Vagina (tissue), 2 donors: ENCODE measurements at regions of chr14 and their contacts with region 1.

Region 1: DNA sequence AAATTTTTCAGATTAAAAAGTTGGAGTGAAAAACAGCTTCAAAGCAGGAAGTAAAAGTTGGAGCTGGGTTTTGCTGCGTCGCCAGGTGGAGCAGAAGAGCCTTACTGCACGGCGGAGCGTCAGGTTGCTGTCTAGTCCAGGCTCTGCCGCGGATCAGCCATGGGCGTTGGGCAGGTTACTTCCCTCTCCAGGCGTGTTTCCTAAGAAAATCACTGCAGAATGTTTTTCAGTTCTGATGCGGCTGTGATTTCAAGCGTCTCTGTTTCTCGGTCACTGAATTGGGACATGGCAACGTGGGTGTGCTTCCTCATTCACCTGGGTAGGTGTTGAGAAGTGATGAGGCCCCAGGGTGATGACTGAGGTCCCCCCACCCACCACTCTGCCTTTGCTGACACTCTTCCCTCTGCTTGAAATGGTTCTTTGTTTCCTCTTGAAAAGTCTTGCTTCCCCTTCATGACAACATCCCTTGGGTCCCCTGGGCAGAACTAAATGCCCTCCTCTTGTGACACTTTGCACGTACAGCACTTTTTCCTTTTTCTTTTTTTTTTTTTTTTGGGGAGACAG is 7.6 kb downstream of the EVL start:
- DNase-seq: no peak
- H3K4me3 ChIP-seq: no peak overlapping the region
- H3K27ac ChIP-seq: no peak overlapping the region
- H3K4me1 ChIP-seq: peaks cover 54% of the 10 kb centered on the region
- H3K27me3 ChIP-seq: no peaks in the 10 kb centered on the region
- CTCF ChIP-seq: no peak
- POLR2A ChIP-seq: no peak

Region 2: GRCh38 chr14:99215277-99215676 is 857.6 kb before region 1 on chr14:
- intact Hi-C with region 1: no loop called
- DNase-seq: no peak
- H3K4me3 ChIP-seq: peak overlapping the region in 1 of 2 donors; percentile 30
- H3K27ac ChIP-seq: no peak overlapping the region
- H3K4me1 ChIP-seq: peaks cover 38% of the 10 kb centered on the region
- H3K27me3 ChIP-seq: no peaks in the 10 kb centered on the region
- CTCF ChIP-seq: no peak
- POLR2A ChIP-seq: no peak

Region 3: DNA sequence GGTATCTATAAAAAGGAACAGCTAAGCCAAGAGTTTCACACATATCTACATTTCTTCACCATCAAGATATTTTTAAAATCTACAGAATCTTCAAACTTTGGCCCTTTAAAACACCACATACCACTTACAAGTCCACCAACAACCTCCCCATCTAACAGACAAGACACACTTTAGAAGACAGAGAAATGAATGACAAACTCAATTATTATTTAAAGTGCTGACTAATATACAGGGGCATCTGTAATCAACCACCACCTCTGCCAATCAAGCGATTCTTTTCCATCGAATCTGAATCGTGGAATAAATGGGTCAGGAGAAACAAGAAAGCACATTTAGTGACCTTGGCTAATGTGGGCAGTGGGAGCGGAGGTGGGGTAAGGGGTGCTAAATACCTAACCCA is 599.9 kb before region 1 on chr14:
- intact Hi-C with region 1: loop called (anchors 5 kb)
- DNase-seq: no peak
- H3K4me3 ChIP-seq: no peak overlapping the region
- H3K27ac ChIP-seq: no peak overlapping the region
- H3K4me1 ChIP-seq: peaks cover 37% of the 10 kb centered on the region
- H3K27me3 ChIP-seq: no peaks in the 10 kb centered on the region
- CTCF ChIP-seq: no peak
- POLR2A ChIP-seq: no peak